ENCODE measurements at regions of chr6 and their contacts with region 1.

Region 1: GRCh38 chr6:33428966-33429752 is 9.3 kb downstream of the SYNGAP1 start:
- DNase-seq: no peak

Region 2: GRCh38 chr6:33456156-33456555 is 27.0 kb after region 1 on chr6:
- intact Hi-C with region 1: loop called in 1 of 2 experiments (anchors 1 kb)
- DNase-seq: no peak

Measured in posterior vena cava (tissue), 2 donors.